Heart right ventricle (tissue), 16 donors: ENCODE measurements at regions of chr5 and their contacts with region 1.

Region 1: DNA sequence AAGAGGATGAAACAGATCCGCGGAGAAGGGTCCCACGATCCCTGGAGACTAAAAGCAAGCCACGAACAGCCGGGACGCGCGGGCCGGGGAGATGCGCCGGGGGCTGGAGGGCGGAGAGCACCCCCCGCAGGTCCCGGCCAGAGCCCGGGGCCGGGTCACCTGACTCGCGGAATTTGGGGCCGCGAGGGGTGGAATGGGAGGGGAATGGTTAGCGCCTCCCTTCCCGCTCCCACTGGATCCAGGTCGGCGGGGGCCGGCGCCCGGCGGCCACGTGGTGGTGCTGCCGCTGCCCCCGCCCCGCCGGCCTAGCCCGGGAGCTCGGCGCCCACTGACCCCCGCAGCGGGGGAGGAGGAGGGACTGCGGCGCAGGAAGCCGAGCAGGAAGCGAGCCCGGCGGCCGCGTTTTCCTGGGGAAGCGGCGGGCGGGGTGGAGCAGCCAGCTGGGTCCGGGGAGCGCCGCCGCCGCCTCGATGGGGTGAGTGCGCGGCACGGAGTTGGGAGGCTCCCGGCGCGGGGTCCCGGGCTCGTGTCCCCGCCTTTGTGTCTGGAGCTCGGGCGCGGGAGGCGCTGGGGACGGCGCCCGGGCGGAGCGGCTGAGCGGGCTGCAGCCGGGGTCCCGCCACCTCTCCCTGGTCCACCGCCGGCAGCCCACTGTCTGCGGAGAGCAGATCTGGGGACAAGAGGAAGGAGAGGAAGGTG is at the start of gene RAI14:
- DNase-seq: peak; percentile 76 to 79
- ATAC-seq: peak; percentile 88 to 94 (median 90)
- H3K4me3 ChIP-seq: peak within 1 kb of the TSS; percentile 61 to 96 (median 89)
- H3K27ac ChIP-seq: peak within 1 kb of the TSS; percentile 72 to 98 (median 91)
- H3K4me1 ChIP-seq: peaks cover 0 to 36% (median 19%) of the 10 kb centered on the region in 9 donors
- H3K27me3 ChIP-seq: peaks cover 0 to 45% (median 0%) of the 10 kb centered on the region in 7 donors
- CTCF ChIP-seq: peak in 3 of 9 donors; percentile 25 to 49 (median 42)
- total RNA-seq, gene RAI14: 4.9 to 25.5 (median 11.7) TPM

Region 2: GRCh38 chr5:34529536-34530306 is 126.4 kb before region 1 on chr5:
- intact Hi-C with region 1: loop called in 6 of 10 experiments (anchors 5 to 10 kb)
- DNase-seq: no peak
- ATAC-seq: no peak
- H3K4me3 ChIP-seq: no peak overlapping the region
- H3K27ac ChIP-seq: no peak overlapping the region
- H3K4me1 ChIP-seq: peaks cover 0 to 23% (median 0%) of the 10 kb centered on the region in 9 donors
- H3K27me3 ChIP-seq: no peaks in the 10 kb centered on the region
- CTCF ChIP-seq: no peak

Region 3: DNA sequence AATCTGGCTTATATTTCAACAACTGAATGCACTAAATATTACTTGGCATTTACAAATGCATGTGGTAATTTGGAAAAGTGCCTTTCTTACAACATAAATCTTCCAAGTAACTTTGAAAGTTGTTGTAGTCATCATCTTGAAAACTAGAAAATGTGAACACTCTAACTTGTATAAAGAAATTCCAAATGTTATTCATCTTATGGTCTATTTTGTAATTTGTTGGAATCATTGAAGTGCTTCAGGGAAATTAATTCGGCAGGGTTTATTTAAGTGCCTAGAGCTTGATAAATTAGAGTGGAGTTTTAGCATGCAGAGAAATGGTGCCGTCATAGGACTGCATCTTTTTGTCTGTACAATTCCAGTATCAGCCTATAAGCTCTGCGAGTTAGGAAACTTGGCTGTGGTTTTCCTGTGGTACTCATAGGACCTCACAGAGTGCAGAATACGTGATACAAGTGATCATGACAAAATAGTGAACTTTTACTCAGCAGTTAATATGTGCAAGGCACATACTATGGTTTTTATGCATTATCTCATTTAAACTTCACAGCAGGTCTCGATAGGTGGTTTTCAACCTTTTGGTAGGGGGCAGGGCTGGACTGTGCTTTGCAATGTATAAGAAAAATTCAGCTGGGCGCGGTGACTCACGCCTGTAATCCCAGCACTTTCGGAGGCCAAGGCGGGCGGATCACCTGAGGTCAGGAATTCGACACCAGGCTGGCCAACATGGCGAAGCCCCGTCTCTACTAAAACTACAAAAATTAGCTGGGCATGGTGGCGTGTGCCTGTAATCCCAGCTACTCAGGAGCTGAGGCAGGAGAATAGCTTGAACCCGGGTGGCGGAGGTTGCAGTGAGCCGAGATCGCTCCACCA is 79.6 kb after region 1 on chr5:
- intact Hi-C with region 1: loop called in 1 of 10 experiments (anchors 10 kb)
- DNase-seq: no peak
- ATAC-seq: no peak
- H3K4me3 ChIP-seq: no peak overlapping the region
- H3K27ac ChIP-seq: no peak overlapping the region
- H3K4me1 ChIP-seq: peaks cover 0 to 33% (median 9%) of the 10 kb centered on the region in 9 donors
- H3K27me3 ChIP-seq: no peaks in the 10 kb centered on the region
- CTCF ChIP-seq: no peak

Region 4: DNA sequence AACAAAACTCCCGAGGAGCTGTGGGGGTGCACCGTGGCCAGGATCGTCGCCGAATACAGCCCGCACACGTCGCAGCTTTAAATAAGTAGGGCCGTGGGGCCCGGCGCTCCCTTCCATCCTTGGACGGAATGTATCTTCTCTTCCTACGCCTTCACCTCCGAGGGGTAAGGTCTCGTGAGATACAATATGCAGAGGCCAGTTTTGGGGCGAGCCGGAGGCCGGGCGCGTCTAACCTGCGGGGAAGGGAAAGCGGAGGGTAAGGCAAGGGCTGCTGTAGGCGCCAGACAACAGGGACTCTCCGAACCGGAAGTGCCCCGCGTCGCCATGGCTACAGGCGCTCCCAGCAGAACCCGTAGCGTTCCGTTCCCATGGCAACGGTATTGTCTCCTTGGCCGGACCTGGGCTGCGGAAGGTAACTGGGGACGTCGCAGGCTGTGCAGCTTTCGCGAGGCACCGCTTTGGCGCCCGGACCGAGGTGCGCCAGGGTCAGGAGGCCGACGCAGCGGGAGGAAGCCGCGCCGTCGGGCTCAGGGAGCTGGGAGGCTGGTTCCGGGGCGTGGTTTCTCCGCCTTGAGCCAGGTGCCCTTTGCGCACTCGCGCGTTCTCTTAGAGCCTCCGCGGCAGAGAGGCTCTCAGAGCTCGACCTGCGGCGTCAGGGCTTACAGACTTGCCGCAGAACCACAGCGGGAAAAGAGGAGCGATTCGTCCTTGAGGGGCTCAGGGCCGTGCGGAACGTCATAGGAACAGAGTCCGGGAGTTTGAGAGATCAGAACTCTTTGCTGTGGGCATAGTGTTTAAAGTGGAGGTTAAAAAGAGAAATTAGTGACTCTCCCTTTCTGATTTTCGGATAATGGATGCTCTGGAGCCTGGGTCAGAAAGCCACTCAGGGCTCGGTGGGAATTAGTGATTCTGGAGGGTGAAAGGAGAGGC is 182.9 kb after region 1 on chr5 and contains the start of gene TTC23L:
- intact Hi-C with region 1: loop called in 3 of 10 experiments (anchors 2 to 10 kb)
- DNase-seq: peak; percentile 84 to 88
- ATAC-seq: peak; percentile 92 to 97 (median 96)
- H3K4me3 ChIP-seq: peak within 1 kb of the TSS; percentile 60 to 88 (median 72)
- H3K27ac ChIP-seq: peak within 1 kb of the TSS in 7 of 10 donors; percentile 9 to 36 (median 23)
- H3K4me1 ChIP-seq: peaks cover 0 to 12% (median 3%) of the 10 kb centered on the region in 9 donors
- H3K27me3 ChIP-seq: peaks cover 0 to 5% (median 0%) of the 10 kb centered on the region in 7 donors
- CTCF ChIP-seq: no peak
- total RNA-seq, gene TTC23L: 0.66 TPM in 1 of 10 donors, not detected in the others

Region 5: DNA sequence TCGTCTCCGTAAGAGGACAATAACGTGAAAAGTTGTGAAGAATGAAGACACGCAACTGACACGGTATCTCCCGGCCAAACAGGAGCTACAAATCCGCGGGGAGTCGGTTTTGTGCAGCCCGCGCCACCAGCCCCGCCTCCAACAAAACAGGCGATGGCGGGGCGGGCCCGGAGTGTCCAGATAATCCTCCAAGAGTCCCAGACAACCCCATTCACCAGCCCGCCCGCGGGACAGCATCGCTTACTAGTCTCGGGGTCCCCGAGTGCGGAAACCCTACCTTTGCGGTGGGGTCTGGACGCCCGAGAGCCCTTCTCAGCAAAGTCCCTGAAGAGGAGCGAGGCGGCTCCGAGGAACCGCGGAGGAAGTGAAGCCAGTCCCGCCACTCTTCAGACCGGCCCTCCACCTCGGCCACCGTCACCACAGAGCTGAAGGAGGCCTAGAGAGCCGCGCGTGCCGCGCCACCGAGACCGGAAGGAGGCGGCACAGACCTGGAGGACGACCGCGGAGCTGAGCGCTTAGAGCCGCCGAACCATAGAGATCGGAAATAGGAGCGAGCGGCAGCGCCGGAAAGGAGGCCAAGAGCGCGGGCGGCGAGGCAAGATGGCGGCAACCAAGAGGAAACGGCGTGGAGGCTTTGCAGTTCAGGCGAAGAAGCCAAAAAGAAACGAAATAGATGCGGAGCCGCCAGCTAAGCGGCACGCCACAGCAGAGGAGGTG is 259.1 kb after region 1 on chr5 and contains the starts of genes BRIX1 and RAD1:
- intact Hi-C with region 1: loop called in 1 of 10 experiments (anchors 10 kb)
- DNase-seq: peak; percentile 95 to 96
- ATAC-seq: peak; percentile 100
- H3K4me3 ChIP-seq: peak within 1 kb of the TSS; percentile 76 to 97 (median 86)
- H3K27ac ChIP-seq: peak within 1 kb of the TSS; percentile 41 to 93 (median 84)
- H3K4me1 ChIP-seq: peaks cover 3 to 35% (median 27%) of the 10 kb centered on the region in 9 donors
- H3K27me3 ChIP-seq: no peaks in the 10 kb centered on the region
- CTCF ChIP-seq: peak in 6 of 9 donors; percentile 9 to 47 (median 22)
- total RNA-seq, gene BRIX1: 9.5 to 17.2 (median 14.9) TPM
- total RNA-seq, gene RAD1: 18.9 to 27.5 (median 23.9) TPM